ENCODE measurements at regions of chr11 and their contacts with region 1.

Region 1: GRCh38 chr11:102287964-102288724 is 29.1 kb upstream of the BIRC3 start:
- DNase-seq: peak; percentile 56 to 74 (median 71)
- H3K4me3 ChIP-seq: no peak overlapping the region
- H3K4me3 Mint-ChIP-seq: peak overlapping the region in 5 of 8 donors; percentile 5 to 32 (median 12)
- H3K27ac ChIP-seq: no peak overlapping the region
- H3K27ac Mint-ChIP-seq: peak overlapping the region in 5 of 7 donors; percentile 19 to 79 (median 63)
- H3K4me1 ChIP-seq: peaks cover 18% of the 10 kb centered on the region
- H3K4me1 Mint-ChIP-seq: peaks cover 17 to 36% (median 20%) of the 10 kb centered on the region in 4 donors
- H3K27me3 ChIP-seq: no peaks in the 10 kb centered on the region
- H3K27me3 Mint-ChIP-seq: peaks cover 0 to 2% of the 10 kb centered on the region in 2 donors

Region 2: DNA sequence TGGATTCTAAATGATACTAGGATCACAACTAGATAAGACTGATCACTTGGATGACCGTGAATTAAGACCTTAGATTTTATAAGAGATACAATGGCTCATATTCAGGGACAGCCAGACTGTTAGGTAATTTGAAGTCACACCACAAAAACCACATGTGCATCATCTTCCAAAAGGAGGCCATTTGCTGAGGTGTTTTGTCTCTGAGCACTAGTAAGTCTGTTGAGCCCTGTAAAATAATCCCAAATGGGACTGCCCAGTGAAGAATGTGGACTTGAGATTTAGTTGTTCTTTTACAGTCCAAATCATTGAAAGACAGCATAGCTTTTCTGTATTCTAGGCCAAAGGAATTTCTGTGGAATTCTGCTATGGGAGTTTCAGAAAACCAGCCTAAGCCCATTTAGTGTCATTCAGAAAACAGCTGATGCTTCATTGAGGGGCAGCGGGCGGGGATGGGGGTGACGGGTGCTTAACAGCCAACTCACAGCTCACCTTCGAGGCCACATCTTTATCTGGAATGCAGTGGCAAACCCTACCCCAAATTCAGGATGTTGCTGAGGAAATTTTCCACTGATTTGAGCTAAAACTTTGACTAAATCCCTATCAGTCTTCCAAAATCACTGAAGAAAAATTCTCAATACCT is 50.9 kb before region 1 on chr11:
- CTCF ChIA-PET with region 1: no interaction called
- POLR2A ChIA-PET with region 1: no interaction called
- intact Hi-C with region 1: no loop called
- DNase-seq: no peak
- H3K4me3 ChIP-seq: no peak overlapping the region
- H3K4me3 Mint-ChIP-seq: no peak overlapping the region
- H3K27ac ChIP-seq: no peak overlapping the region
- H3K27ac Mint-ChIP-seq: no peak overlapping the region
- H3K4me1 ChIP-seq: no peaks in the 10 kb centered on the region
- H3K4me1 Mint-ChIP-seq: peaks cover 0 to 1% (median 0%) of the 10 kb centered on the region in 4 donors
- H3K27me3 ChIP-seq: no peaks in the 10 kb centered on the region
- H3K27me3 Mint-ChIP-seq: peaks cover 24 to 31% of the 10 kb centered on the region in 2 donors

Region 3: GRCh38 chr11:102306048-102306585 is 18.0 kb after region 1 on chr11:
- CTCF ChIA-PET with region 1: interaction called, 654 read pairs
- POLR2A ChIA-PET with region 1: interaction called, 103 read pairs
- intact Hi-C with region 1: no loop called
- DNase-seq: peak in 3 of 5 donors; percentile 35 to 74 (median 40)
- H3K4me3 ChIP-seq: peak overlapping the region; percentile 3 to 14
- H3K4me3 Mint-ChIP-seq: peak overlapping the region; percentile 51 to 77 (median 69)
- H3K27ac ChIP-seq: peak overlapping the region; percentile 60
- H3K27ac Mint-ChIP-seq: peak overlapping the region; percentile 84 to 98 (median 94)
- H3K4me1 ChIP-seq: peaks cover 87% of the 10 kb centered on the region
- H3K4me1 Mint-ChIP-seq: peaks cover 54 to 85% (median 73%) of the 10 kb centered on the region in 4 donors
- H3K27me3 ChIP-seq: no peaks in the 10 kb centered on the region
- H3K27me3 Mint-ChIP-seq: no peaks in the 10 kb centered on the region

Region 4: GRCh38 chr11:102332611-102332994 is 44.5 kb after region 1 on chr11:
- CTCF ChIA-PET with region 1: interaction called, 31 read pairs
- POLR2A ChIA-PET with region 1: interaction called, 4 read pairs
- intact Hi-C with region 1: no loop called
- DNase-seq: no peak
- H3K4me3 ChIP-seq: no peak overlapping the region
- H3K4me3 Mint-ChIP-seq: no peak overlapping the region
- H3K27ac ChIP-seq: peak overlapping the region; percentile 23
- H3K27ac Mint-ChIP-seq: peak overlapping the region in 6 of 7 donors; percentile 26 to 89 (median 57)
- H3K4me1 ChIP-seq: peaks cover 36% of the 10 kb centered on the region
- H3K4me1 Mint-ChIP-seq: peaks cover 15 to 24% (median 18%) of the 10 kb centered on the region in 4 donors
- H3K27me3 ChIP-seq: no peaks in the 10 kb centered on the region
- H3K27me3 Mint-ChIP-seq: no peaks in the 10 kb centered on the region

Region 5: DNA sequence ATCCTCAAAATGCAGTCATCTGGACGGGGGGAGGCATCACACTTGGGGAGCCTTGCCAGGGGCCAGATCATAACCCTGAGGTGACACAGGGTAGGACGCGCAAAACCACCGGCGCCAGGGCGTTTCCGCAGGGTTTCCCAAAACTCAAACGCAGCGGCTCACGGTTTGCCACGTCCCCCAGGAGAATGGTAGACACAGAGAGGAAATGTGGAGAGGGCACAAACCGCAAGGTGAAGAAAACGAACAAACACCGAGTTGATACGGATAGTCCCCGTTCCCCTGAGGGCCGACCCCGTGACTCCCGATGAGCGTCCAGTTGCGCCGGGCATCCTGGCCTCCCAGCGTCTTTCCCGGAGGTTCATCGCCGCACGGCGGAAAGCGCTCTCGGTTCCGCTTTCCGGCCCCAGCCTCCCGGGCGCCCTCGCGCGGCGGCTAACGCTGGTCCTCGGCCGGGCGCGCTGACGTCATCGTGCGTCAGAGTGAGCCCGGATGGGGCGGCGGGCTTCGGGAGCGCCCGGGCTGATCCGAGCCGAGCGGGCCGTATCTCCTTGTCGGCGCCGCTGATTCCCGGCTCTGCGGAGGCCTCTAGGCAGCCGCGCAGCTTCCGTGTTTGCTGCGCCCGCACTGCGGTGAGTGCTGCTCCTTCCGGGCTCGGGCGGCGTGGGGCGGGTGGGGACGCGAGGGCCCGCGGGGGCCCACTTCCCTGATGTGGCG is 58.8 kb after region 1 on chr11 and contains the start of gene BIRC2:
- CTCF ChIA-PET with region 1: interaction called, 89 read pairs
- POLR2A ChIA-PET with region 1: interaction called, 16 read pairs
- intact Hi-C with region 1: loop called (anchors 1 kb)
- DNase-seq: peak; percentile 92 to 97 (median 95)
- H3K4me3 ChIP-seq: peak within 1 kb of the TSS; percentile 81 to 98
- H3K4me3 Mint-ChIP-seq: peak within 1 kb of the TSS; percentile 89 to 100 (median 97)
- H3K27ac ChIP-seq: peak within 1 kb of the TSS; percentile 94
- H3K27ac Mint-ChIP-seq: peak within 1 kb of the TSS; percentile 98 to 100 (median 99)
- H3K4me1 ChIP-seq: peaks cover 30% of the 10 kb centered on the region
- H3K4me1 Mint-ChIP-seq: peaks cover 24 to 56% (median 32%) of the 10 kb centered on the region in 4 donors
- H3K27me3 ChIP-seq: no peaks in the 10 kb centered on the region
- H3K27me3 Mint-ChIP-seq: peaks cover 0 to 1% of the 10 kb centered on the region in 2 donors
- total RNA-seq, gene BIRC2: 60.9 to 61.2 TPM

Region 6: DNA sequence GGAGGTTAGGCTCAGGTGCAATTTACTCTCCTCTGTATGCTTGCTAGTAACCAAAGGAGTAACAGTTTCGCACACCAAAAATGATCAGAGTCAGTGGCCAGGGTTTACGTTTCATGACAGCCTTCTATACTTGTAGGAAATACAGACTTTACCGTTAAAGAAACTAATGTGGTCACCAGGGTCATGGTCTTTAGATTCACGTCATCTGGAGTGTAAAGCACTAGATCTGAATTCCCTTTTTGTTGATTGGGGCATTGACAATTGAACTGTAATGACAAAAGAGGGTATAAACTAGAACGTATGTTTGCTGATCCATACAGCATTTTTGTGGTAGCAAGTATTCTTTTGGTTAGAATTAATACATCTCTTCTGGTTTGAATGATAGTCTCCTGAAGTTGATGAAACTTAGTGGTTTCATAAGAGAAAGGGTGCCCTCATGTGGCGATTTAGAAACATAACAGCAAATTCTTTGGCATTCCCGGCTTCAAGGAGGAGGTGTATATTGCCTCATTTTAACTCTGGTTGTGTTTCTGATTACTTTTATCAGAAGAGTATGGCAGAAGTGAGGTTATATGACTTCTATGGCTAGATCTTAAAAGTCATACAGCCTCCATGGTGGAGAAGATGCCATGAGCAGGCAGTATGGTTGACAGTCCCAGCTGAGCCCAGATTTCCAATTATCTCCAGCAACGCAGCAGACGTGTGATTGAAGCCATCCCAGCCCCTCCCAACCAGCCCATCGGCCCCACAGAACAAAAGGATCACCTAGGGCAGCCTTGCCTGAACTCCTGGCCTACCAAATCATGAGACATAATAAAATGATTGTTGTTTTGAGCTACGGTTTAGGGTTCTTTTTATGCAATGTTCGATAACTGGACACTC is 207.3 kb after region 1 on chr11:
- CTCF ChIA-PET with region 1: interaction called, 28 read pairs
- POLR2A ChIA-PET with region 1: no interaction called
- intact Hi-C with region 1: loop called (anchors 1 kb)
- DNase-seq: peak; percentile 59 to 75 (median 73)
- H3K4me3 ChIP-seq: no peak overlapping the region
- H3K4me3 Mint-ChIP-seq: peak overlapping the region in 1 of 8 donors; percentile 6
- H3K27ac ChIP-seq: no peak overlapping the region
- H3K27ac Mint-ChIP-seq: no peak overlapping the region
- H3K4me1 ChIP-seq: peaks cover 4% of the 10 kb centered on the region
- H3K4me1 Mint-ChIP-seq: peaks cover 0 to 7% (median 5%) of the 10 kb centered on the region in 4 donors
- H3K27me3 ChIP-seq: peaks cover 4% of the 10 kb centered on the region
- H3K27me3 Mint-ChIP-seq: peaks cover 5 to 7% of the 10 kb centered on the region in 2 donors

Region 7: GRCh38 chr11:102666331-102666957 is 378.3 kb after region 1 on chr11:
- CTCF ChIA-PET with region 1: interaction called, 55 read pairs
- POLR2A ChIA-PET with region 1: interaction called, 3 read pairs
- intact Hi-C with region 1: loop called (anchors 1 kb)
- DNase-seq: peak in 4 of 5 donors; percentile 30 to 37 (median 33)
- H3K4me3 ChIP-seq: no peak overlapping the region
- H3K4me3 Mint-ChIP-seq: no peak overlapping the region
- H3K27ac ChIP-seq: no peak overlapping the region
- H3K27ac Mint-ChIP-seq: no peak overlapping the region
- H3K4me1 ChIP-seq: no peaks in the 10 kb centered on the region
- H3K4me1 Mint-ChIP-seq: no peaks in the 10 kb centered on the region
- H3K27me3 ChIP-seq: no peaks in the 10 kb centered on the region
- H3K27me3 Mint-ChIP-seq: peaks cover 1 to 12% of the 10 kb centered on the region in 2 donors

Measured in CD4-positive, alpha-beta memory T cell (primary cell).